ENCODE measurements at regions of chr19 and their contacts with region 1.

Region 1: DNA sequence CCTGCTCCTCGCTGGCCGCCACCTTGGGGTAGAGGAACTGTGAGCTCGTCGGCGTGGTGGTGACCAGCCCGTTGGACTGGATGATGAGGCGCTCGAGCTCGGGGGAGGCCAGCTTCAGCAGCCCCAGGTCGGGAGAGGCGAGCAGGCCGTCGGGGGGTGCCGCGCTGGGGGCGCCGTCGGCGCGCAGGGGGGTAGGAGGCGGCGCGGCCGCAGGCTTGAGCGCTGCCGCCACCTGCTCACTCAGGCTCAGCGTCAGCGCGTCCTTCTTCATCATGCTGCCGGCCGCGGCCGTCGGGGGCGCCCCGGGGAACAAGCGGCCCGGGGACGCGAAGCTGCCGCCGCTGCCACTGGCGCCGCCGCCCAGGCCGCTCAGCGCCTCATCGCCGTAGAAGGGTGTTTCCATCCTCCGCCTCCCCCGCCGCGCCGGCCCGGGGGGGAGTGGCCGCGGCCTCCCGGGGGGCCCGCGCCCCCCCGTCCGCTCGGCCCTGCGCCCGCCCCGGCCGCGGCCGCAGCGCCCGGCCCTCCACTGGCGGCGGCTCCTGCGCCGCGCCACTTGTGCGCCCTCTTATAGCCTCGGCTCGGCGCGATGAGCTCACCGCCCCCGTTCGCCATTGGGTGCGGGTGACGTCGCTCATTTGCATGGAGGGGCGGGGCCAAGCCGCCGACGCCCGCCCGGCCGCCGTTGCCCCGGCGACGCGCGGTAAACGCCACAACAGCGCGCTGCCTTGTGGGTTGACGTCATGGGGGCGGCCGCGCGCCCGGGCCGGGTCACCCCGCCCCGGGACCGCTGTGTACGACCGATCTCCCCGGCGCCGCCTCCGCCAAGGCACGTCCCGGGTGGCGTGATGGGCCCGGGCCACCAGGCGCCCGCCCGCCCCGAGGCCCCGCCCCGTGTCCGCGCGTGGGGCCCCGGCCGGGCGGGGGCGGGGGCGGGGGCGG is at the start of gene JUND:
- DNase-seq: peak; percentile 95 to 97
- ATAC-seq: peak; percentile 60 to 66
- H3K4me3 ChIP-seq: peak within 1 kb of the TSS; percentile 78 to 98 (median 90)
- H3K27ac ChIP-seq: peak within 1 kb of the TSS; percentile 99 to 100 (median 100)
- H3K4me1 ChIP-seq: peaks cover 22 to 37% of the 10 kb centered on the region in 2 donors
- H3K27me3 ChIP-seq: no peaks in the 10 kb centered on the region
- CTCF ChIP-seq: peak in 1 of 5 experiments; percentile 7
- POLR2A ChIP-seq: peak; percentile 99
- total RNA-seq, gene JUND: 67.2 to 258 (median 221) TPM

Region 2: GRCh38 chr19:18007044-18007916 is 274.1 kb before region 1 on chr19:
- in situ Hi-C with region 1: no loop called
- intact Hi-C with region 1: loop called (anchors 5 kb)
- DNase-seq: peak; percentile 81 to 84
- ATAC-seq: peak; percentile 61 to 74
- H3K4me3 ChIP-seq: peak overlapping the region; percentile 74 to 99 (median 83)
- H3K27ac ChIP-seq: peak overlapping the region; percentile 89 to 100 (median 95)
- H3K4me1 ChIP-seq: peaks cover under 1 to 12% of the 10 kb centered on the region in 2 donors
- H3K27me3 ChIP-seq: peaks cover 0 to 2% (median 0%) of the 10 kb centered on the region in 3 donors
- CTCF ChIP-seq: peak; percentile 97 to 100 (median 99)
- POLR2A ChIP-seq: peak; percentile 76 to 90

Region 3: GRCh38 chr19:18291590-18292461 is 10.5 kb after region 1 on chr19:
- in situ Hi-C with region 1: no loop called
- intact Hi-C with region 1: loop called (anchors 1 kb)
- DNase-seq: peak; percentile 61 to 72
- ATAC-seq: peak; percentile 72
- H3K4me3 ChIP-seq: peak overlapping the region; percentile 67 to 88 (median 74)
- H3K27ac ChIP-seq: peak overlapping the region; percentile 86 to 98 (median 93)
- H3K4me1 ChIP-seq: peaks cover 5 to 9% of the 10 kb centered on the region in 2 donors
- H3K27me3 ChIP-seq: no peaks in the 10 kb centered on the region
- CTCF ChIP-seq: no peak
- POLR2A ChIP-seq: peak; percentile 46 to 79

Region 4: GRCh38 chr19:18310118-18310909 is 29.0 kb after region 1 on chr19:
- in situ Hi-C with region 1: no loop called
- intact Hi-C with region 1: no loop called
- DNase-seq: no peak
- ATAC-seq: no peak
- H3K4me3 ChIP-seq: no peak overlapping the region
- H3K27ac ChIP-seq: no peak overlapping the region
- H3K4me1 ChIP-seq: peaks cover 18 to 19% of the 10 kb centered on the region in 2 donors
- H3K27me3 ChIP-seq: no peaks in the 10 kb centered on the region
- CTCF ChIP-seq: no peak
- POLR2A ChIP-seq: no peak

Region 5: DNA sequence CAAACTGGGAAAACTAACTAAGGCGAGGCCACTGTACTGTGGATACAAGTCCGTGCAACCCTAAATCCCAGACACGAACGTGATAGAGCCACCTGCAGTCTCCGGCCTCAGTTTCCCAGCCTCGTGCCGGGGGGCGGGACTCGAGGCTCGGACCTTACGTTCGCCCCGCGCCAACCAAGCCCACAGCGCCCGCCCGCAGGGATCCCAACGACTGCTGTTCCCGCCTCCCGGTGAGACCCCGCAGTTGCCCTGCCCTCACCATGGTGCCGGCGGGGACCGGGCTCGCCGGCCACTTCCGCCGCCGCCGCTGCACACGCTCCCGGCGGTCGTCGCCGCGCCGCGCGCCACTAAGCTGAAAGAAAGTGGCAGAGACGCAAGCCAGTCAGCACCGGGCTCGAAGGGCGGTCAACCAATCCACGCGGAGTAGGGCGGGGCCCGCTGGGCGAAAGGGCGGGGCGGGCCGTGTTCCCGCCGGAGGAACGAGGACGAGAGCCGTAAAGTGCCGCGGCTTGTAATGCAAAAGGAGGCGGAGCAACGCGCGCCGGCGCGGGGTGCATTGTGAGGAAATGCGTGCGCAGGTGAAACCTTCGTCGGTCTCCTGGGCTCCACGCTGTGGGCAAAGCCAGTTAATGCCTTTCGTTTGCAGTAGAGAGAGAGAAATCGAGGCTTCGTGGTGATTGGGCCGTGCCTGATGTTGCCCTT is 41.6 kb after region 1 on chr19 and contains the start of gene LSM4:
- in situ Hi-C with region 1: loop called (anchors 5 kb)
- intact Hi-C with region 1: loop called (anchors 1 kb)
- DNase-seq: peak; percentile 98 to 99
- ATAC-seq: peak; percentile 94 to 97
- H3K4me3 ChIP-seq: peak within 1 kb of the TSS; percentile 81 to 88 (median 82)
- H3K27ac ChIP-seq: peak within 1 kb of the TSS; percentile 91 to 97 (median 95)
- H3K4me1 ChIP-seq: peaks cover 40 to 45% of the 10 kb centered on the region in 2 donors
- H3K27me3 ChIP-seq: no peaks in the 10 kb centered on the region
- CTCF ChIP-seq: peak in 3 of 5 experiments; percentile 20 to 31 (median 25)
- POLR2A ChIP-seq: peak; percentile 90 to 91
- total RNA-seq, gene LSM4: 122 to 294 (median 193) TPM

Region 6: DNA sequence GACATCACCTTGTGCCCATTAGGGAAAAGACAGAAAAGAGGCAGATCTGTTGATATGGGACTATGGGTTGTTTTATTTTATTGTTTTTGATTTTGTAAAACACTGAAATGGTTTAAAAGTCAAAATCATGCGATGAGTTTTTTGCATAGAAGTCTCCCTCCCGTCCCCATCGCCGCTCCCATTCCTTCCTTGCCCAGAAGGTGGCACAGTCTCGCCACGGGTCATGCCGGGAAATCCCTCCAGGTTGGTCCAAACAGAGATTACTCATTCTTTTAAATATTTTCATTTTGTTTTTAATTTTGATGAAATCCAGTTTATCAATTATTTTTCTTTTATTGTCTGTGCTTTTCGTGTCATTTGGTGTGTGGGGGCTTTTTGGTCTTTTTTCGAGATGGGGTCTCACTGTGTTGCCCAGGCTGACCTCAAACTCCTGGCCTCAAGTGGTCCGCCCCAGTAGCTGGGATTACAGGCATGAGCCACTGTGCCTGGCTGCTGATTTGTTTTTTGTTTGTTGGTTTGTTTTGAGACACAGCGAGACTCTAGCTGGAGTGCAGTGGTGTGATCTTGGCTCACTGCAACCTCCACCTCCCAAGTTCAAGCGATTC is 68.3 kb after region 1 on chr19:
- in situ Hi-C with region 1: no loop called
- intact Hi-C with region 1: no loop called
- DNase-seq: peak in 1 of 2 donors; percentile 33
- ATAC-seq: no peak
- H3K4me3 ChIP-seq: no peak overlapping the region
- H3K27ac ChIP-seq: no peak overlapping the region
- H3K4me1 ChIP-seq: peaks cover 2% of the 10 kb centered on the region in 2 donors
- H3K27me3 ChIP-seq: no peaks in the 10 kb centered on the region
- CTCF ChIP-seq: peak; percentile 64 to 76 (median 65)
- POLR2A ChIP-seq: no peak

Region 7: DNA sequence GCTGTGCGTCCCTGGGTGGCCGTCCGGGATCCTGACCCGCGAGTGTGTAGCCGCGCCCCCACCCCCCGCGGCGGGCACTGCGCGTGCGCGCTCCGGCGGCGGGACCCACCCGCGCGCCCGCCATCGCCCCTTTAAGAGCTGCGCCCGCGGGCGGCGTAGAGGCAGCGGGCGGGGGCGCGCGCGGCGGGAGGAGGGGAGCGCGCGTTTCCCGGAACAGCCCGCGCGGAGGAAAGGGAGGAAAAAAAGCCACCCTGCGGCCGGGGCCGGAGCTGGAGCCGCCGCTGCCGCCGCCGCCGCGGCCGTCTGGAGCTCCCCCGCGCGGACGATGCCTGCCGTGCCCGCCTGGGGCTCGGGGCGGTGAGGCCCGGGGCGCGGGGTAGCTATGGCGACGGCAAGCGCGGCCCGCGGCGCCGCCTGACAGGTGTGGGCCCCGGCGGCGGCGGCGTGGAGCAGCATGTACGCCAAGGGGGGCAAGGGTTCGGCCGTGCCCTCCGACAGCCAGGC is 137.9 kb after region 1 on chr19 and contains the start of gene SSBP4:
- in situ Hi-C with region 1: no loop called
- intact Hi-C with region 1: loop called (anchors 5 kb)
- DNase-seq: peak in 1 of 2 donors; percentile 59
- ATAC-seq: peak; percentile 60 to 64
- H3K4me3 ChIP-seq: peak within 1 kb of the TSS; percentile 57 to 69 (median 62)
- H3K27ac ChIP-seq: peak within 1 kb of the TSS; percentile 83 to 92 (median 84)
- H3K4me1 ChIP-seq: peaks cover 18 to 62% of the 10 kb centered on the region in 2 donors
- H3K27me3 ChIP-seq: peaks cover 20 to 26% (median 21%) of the 10 kb centered on the region in 3 donors
- CTCF ChIP-seq: peak in 4 of 5 experiments; percentile 57 to 67 (median 59)
- POLR2A ChIP-seq: peak; percentile 59 to 60
- total RNA-seq, gene SSBP4: 24.7 to 65.2 (median 44.1) TPM

Measured in gastrocnemius medialis (tissue), 4 donors.